Activated naive CD4-positive, alpha-beta T cell treated with anti-CD3 and anti-CD28 coated beads for 36 hours (primary cell): ENCODE measurements at regions of chr12 and their contacts with region 1.

Region 1: DNA sequence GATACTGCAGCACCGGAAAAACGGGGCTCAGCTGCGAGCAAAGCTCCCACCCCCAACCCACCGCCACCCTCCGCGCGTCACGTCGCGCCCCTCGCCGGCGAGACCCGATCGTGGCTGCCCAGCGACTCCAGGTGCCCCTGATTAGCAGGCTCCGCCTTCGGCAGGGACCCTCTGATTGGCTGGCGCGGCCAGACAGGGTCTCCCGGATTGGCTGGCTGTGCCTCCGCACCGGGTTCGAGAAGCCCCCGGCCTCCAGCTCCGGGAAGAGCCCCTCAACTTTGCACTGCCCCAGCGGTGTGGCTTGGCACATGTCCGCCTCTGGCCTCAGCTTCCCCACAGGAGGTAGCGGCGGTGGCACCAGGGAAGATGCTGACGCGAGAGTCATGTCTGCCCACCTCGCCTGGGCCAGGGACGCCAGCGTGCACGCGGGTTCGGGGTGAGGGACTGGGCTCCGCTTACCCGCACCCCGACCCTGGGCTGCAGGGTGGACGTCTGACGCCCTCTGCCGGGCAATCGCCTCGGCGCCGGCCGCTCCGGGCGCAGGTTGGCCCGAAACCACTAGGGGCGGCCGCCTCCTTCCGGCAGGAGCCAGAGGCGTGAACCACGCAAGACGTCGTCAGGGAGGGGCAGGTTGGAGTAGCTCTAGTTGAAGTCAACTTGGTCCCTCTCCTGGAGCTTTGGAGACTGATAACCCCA is 498 bp upstream of the RHOF start:
- DNase-seq: peak; percentile 97
- H3K4me3 Mint-ChIP-seq: peak overlapping the region; percentile 83
- H3K27ac Mint-ChIP-seq: peak overlapping the region; percentile 92
- H3K4me1 Mint-ChIP-seq: peaks cover 64% of the 10 kb centered on the region
- H3K27me3 Mint-ChIP-seq: no peaks in the 10 kb centered on the region

Region 2: DNA sequence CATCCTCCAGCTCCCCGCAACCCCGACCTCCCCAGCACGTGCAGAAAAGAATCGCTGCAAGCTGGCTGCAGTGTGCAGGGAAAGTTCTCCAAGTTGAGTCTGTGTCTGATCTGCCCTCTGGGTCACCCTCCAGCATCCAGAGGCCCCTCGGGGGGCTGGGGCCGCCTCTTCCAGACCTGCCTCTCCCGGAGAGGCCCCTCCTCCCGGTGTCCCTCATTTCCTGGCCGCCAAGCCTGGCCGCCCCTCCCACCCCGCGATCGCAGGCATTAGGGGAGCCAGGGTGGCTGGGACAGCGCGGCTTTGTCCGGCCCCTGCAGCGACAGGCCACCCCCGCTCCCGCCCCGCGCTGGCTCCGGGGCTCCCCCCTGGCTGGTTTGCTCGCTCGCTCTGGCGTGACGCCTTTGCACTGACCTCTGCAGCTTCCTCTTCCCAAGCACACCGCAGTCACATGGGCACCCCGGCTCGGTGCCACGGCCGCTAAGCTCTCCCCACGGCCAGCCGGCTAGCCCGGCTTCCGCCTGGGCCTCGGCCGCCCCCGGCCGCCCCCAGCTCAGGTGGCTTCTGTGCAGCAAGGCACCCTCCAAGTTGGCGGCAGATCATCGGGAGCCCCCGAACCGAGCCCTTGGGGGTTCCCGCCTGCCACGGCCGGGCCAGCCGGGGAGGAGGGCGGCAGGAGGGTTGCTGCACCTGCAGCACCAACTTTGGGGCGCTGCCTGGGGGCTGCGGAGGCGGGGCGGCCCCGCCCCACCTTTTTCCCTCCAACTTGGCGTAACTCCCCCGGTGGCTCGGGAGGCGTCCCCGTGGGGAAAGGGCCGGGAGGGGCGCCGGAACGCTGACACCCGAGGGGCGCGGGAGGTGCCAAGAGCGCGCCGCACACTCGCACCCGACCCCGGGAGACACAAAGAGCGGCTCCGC is 256.8 kb before region 1 on chr12:
- CTCF ChIA-PET with region 1: no interaction called
- intact Hi-C with region 1: loop called (anchors 5 kb)
- DNase-seq: peak; percentile 68
- H3K4me3 Mint-ChIP-seq: peak overlapping the region; percentile 70
- H3K27ac Mint-ChIP-seq: peak overlapping the region; percentile 69
- H3K4me1 Mint-ChIP-seq: peaks cover 43% of the 10 kb centered on the region
- H3K27me3 Mint-ChIP-seq: no peaks in the 10 kb centered on the region

Region 3: GRCh38 chr12:121712461-121713256 is 81.3 kb before region 1 on chr12 and contains the start of gene TMEM120B:
- CTCF ChIA-PET with region 1: interaction called, 31 read pairs
- intact Hi-C with region 1: loop called (anchors 5 kb)
- DNase-seq: peak; percentile 77
- H3K4me3 Mint-ChIP-seq: peak within 1 kb of the TSS; percentile 87
- H3K27ac Mint-ChIP-seq: peak within 1 kb of the TSS; percentile 77
- H3K4me1 Mint-ChIP-seq: peaks cover 19% of the 10 kb centered on the region
- H3K27me3 Mint-ChIP-seq: no peaks in the 10 kb centered on the region
- total RNA-seq, gene TMEM120B: 5.5 to 6.3 TPM

Region 4: GRCh38 chr12:121825041-121825523 is 31.1 kb after region 1 on chr12:
- CTCF ChIA-PET with region 1: interaction called, 16 read pairs
- intact Hi-C with region 1: no loop called
- DNase-seq: no peak
- H3K4me3 Mint-ChIP-seq: no peak overlapping the region
- H3K27ac Mint-ChIP-seq: no peak overlapping the region
- H3K4me1 Mint-ChIP-seq: no peaks in the 10 kb centered on the region
- H3K27me3 Mint-ChIP-seq: no peaks in the 10 kb centered on the region

Region 5: GRCh38 chr12:121917979-121918678 is 124.1 kb after region 1 on chr12 and contains the start of gene CFAP251:
- CTCF ChIA-PET with region 1: interaction called, 11 read pairs
- intact Hi-C with region 1: no loop called
- DNase-seq: peak; percentile 98
- H3K4me3 Mint-ChIP-seq: peak within 1 kb of the TSS; percentile 69
- H3K27ac Mint-ChIP-seq: peak within 1 kb of the TSS; percentile 78
- H3K4me1 Mint-ChIP-seq: peaks cover 16% of the 10 kb centered on the region
- H3K27me3 Mint-ChIP-seq: no peaks in the 10 kb centered on the region
- total RNA-seq, gene CFAP251: 0.20 to 0.62 TPM

Region 6: GRCh38 chr12:122107261-122107660 is 313.3 kb after region 1 on chr12:
- CTCF ChIA-PET with region 1: no interaction called
- intact Hi-C with region 1: loop called (anchors 5 kb)
- DNase-seq: no peak
- H3K4me3 Mint-ChIP-seq: no peak overlapping the region
- H3K27ac Mint-ChIP-seq: peak overlapping the region; percentile 65
- H3K4me1 Mint-ChIP-seq: peaks cover 79% of the 10 kb centered on the region
- H3K27me3 Mint-ChIP-seq: no peaks in the 10 kb centered on the region